HEK293 (cell line): ENCODE measurements at regions of chr17 and their contacts with region 1.

Region 1: GRCh38 chr17:78865682-78866390 is 25.2 kb upstream of the USP36 start:
- H3K4me3 ChIP-seq: no peak overlapping the region
- H3K27ac ChIP-seq: no peak overlapping the region
- H3K4me1 ChIP-seq: peaks cover 2% of the 10 kb centered on the region; the same call in 1 of the 2 replicates
- CTCF ChIP-seq: peak; percentile 57; the same call in 1 of the 2 replicates

Region 2: GRCh38 chr17:78842881-78843565 is 22.8 kb before region 1 on chr17:
- CTCF ChIA-PET with region 1: interaction called, 12 read pairs
- POLR2A ChIA-PET with region 1: interaction called, 4 read pairs
- H3K4me3 ChIP-seq: no peak overlapping the region
- H3K27ac ChIP-seq: no peak overlapping the region
- H3K4me1 ChIP-seq: peaks cover 8% of the 10 kb centered on the region; the same call in 1 of the 2 replicates
- CTCF ChIP-seq: peak; percentile 82

Region 3: GRCh38 chr17:78852709-78853121 is 13.1 kb before region 1 on chr17:
- CTCF ChIA-PET with region 1: interaction called, 36 read pairs
- POLR2A ChIA-PET with region 1: interaction called, 4 read pairs
- H3K4me3 ChIP-seq: no peak overlapping the region
- H3K27ac ChIP-seq: no peak overlapping the region; the same call in 1 of the 2 replicates
- H3K4me1 ChIP-seq: peaks cover 13% of the 10 kb centered on the region
- CTCF ChIP-seq: no peak

Region 4: DNA sequence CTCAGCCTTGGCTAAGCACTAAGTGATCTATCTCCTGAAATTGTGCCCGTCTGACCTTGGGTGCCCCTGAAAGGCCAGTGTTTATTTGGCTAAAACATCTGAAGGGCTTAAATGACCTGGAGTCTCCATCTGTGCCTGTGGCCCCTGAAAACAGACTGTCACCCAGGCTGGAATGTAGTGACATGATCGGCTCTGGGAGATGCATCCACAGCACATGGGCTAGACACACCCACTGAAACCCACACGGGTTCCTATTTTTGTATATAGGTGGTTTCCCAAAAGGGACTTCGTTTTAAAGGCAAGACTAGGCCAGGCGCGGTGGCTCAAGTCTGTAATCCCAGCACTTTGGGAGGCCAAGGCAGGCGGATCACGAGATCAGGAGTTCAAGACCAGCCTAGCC is 23.7 kb after region 1 on chr17:
- CTCF ChIA-PET with region 1: interaction called, 19 read pairs
- POLR2A ChIA-PET with region 1: interaction called, 7 read pairs
- H3K4me3 ChIP-seq: no peak overlapping the region
- H3K27ac ChIP-seq: no peak overlapping the region
- H3K4me1 ChIP-seq: no peaks in the 10 kb centered on the region
- CTCF ChIP-seq: no peak

Region 5: DNA sequence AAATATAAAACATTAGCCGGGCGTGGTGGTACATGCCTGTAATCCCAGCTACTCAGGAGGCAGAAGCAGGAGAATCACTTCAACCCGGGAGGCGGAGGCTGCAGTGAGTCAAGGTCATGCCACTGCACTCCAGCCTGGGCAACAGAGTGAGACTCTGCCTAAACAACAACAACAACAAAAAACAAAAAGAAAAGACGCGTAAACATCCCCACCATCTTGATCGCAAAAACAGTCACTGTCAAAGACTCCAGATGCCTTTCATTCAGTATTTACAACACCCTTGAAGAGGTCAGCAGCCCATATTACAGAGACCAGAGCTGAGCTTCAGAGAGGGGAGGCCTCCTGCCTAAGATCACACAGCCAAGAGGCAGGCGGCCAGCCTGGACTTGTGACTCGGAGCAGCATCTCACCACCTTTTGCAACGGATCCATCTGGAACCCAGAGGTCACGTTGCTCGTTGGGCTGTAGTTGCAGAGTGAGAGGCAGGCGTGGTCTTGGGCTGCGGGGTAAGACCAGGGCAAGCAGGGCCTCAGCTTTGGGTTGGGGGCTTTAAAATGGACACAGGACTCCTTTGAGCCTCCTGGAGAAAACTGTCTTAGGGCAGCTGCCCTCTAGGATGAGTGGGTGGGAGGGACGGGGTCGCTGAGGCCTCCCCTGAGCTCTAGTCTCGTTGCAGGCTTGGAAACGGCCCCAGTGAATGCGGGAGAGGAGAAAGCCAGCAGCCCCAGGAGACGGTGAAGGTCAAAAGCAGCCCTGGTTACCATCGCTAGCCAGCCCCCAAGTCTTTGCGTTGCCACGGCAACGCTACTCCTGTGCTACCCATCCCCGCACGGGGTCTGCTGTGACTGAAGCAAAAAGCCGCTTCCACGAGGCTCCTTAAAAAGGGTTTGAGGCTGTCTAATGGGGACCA is 87.8 kb after region 1 on chr17:
- CTCF ChIA-PET with region 1: interaction called, 10 read pairs
- POLR2A ChIA-PET with region 1: no interaction called
- H3K4me3 ChIP-seq: no peak overlapping the region
- H3K27ac ChIP-seq: no peak overlapping the region
- H3K4me1 ChIP-seq: no peaks in the 10 kb centered on the region
- CTCF ChIP-seq: no peak

Region 6: DNA sequence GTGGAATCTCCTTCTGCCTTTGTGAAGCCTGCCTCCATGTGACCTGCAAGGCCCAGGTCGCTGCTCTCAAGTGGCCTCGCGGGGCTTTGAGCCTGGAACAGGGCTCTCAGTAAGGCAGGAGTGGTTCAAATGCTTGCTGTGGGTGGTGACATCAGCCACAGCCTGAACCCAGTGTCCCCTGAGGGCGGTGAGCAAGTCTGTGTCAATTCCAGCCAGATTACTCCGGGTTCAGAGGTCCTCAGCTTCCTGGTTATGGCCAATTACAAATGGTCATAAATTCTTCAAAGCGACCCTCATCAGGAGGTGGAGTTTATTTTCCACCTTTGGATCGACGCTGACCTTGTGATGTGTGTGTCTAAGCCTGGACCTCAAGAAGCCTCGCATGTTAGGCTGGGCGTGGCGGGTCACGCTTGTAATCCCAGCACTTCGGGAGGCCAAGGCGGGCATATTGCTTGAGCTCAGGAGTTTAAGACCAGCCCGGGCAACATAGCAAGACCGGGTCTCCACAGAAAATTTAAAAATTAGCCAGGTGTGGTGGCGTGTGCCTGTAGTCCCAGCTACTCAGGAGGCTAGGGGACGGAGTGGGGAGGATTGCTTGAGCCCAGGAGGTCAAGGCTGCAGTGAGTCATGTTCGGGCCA is 96.6 kb after region 1 on chr17:
- CTCF ChIA-PET with region 1: interaction called, 22 read pairs
- POLR2A ChIA-PET with region 1: interaction called, 5 read pairs
- H3K4me3 ChIP-seq: no peak overlapping the region
- H3K27ac ChIP-seq: no peak overlapping the region
- H3K4me1 ChIP-seq: no peaks in the 10 kb centered on the region
- CTCF ChIP-seq: no peak